CD4-positive, alpha-beta memory T cell (primary cell): ENCODE measurements at regions of chr19 and their contacts with region 1.

Region 1: DNA sequence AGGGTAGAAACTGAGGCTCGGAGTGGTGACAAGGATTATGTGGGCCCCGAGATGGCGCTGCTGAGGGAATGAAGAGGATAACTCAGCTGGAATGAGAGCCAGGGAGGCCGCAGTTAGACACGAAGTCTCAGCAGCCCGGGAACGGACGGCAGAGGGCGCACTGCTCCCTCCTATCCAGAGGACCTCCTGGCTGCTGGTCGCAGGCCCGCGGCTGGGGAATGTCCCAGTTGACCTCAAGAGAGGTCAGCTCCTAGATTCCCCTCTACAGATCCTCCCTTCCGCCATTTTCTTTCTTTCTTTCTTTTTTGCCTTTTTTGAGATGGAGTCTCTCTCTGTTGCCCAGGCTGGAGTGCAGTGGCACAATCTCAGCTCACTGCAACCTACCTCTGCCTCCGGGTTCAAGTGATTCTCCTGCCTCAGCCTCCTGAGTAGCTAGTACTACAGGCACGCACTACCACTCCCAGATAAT is 24.1 kb upstream of the ASPDH start:
- DNase-seq: peak in 4 of 5 donors; percentile 26 to 35 (median 30)
- H3K4me3 ChIP-seq: no peak overlapping the region
- H3K4me3 Mint-ChIP-seq: no peak overlapping the region
- H3K27ac ChIP-seq: no peak overlapping the region
- H3K27ac Mint-ChIP-seq: no peak overlapping the region
- H3K4me1 ChIP-seq: no peaks in the 10 kb centered on the region
- H3K4me1 Mint-ChIP-seq: no peaks in the 10 kb centered on the region
- H3K27me3 ChIP-seq: no peaks in the 10 kb centered on the region
- H3K27me3 Mint-ChIP-seq: peaks cover 11 to 23% of the 10 kb centered on the region in 2 donors

Region 2: DNA sequence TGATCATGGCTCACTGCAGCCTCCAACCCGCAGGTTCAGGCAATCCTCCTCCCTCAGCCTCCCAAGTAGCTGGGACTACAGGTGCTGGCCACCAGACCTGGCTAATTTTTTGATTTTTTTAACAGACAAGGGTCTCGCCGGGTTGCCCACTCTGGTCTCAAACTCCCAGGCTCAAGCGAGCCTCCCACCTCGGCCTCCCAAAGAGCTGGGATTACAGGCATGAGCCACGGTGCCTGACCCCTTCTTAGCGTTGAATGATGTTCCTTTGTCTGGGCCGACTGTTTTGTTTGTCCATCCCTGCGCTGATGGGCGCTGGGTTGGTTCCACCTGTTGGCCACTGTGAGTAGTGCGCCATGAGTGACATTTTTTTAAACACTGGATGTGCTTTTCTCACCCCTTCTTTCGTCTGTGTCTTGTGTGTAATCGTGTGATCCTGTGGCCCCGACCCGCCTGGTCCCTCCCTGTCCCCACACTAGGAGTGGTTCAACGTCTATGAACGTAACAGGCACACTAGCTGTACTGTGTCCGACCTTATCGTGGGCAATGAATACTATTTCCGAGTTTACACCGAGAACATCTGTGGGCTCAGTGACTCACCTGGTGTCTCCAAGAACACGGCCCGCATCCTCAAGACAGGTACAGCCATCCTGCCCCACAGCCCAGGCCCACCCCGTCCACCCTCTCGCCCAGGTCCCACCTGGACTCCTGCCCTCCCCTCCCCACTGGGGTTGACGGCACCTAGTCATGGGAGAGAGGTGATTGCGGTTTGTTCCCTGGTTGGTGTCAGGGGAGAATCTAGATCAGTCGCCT is 76.5 kb before region 1 on chr19:
- CTCF ChIA-PET with region 1: no interaction called
- POLR2A ChIA-PET with region 1: no interaction called
- intact Hi-C with region 1: no loop called
- DNase-seq: peak in 4 of 5 donors; percentile 37 to 51 (median 46)
- H3K4me3 ChIP-seq: no peak overlapping the region
- H3K4me3 Mint-ChIP-seq: no peak overlapping the region
- H3K27ac ChIP-seq: no peak overlapping the region
- H3K27ac Mint-ChIP-seq: peak overlapping the region in 1 of 7 donors; percentile 63
- H3K4me1 ChIP-seq: no peaks in the 10 kb centered on the region
- H3K4me1 Mint-ChIP-seq: peaks cover 3 to 6% (median 4%) of the 10 kb centered on the region in 4 donors
- H3K27me3 ChIP-seq: peaks cover 2% of the 10 kb centered on the region
- H3K27me3 Mint-ChIP-seq: peaks cover 5 to 18% of the 10 kb centered on the region in 2 donors

Region 3: GRCh38 chr19:50556282-50557008 is 18.6 kb after region 1 on chr19:
- CTCF ChIA-PET with region 1: interaction called, 19 read pairs
- POLR2A ChIA-PET with region 1: no interaction called
- intact Hi-C with region 1: no loop called
- DNase-seq: peak; percentile 57 to 66 (median 64)
- H3K4me3 ChIP-seq: peak overlapping the region; percentile 36 to 46
- H3K4me3 Mint-ChIP-seq: peak overlapping the region; percentile 85 to 96 (median 92)
- H3K27ac ChIP-seq: no peak overlapping the region
- H3K27ac Mint-ChIP-seq: peak overlapping the region in 5 of 7 donors; percentile 25 to 83 (median 65)
- H3K4me1 ChIP-seq: peaks cover 4% of the 10 kb centered on the region
- H3K4me1 Mint-ChIP-seq: peaks cover 5 to 15% (median 10%) of the 10 kb centered on the region in 4 donors
- H3K27me3 ChIP-seq: peaks cover 4% of the 10 kb centered on the region
- H3K27me3 Mint-ChIP-seq: peaks cover 37 to 56% of the 10 kb centered on the region in 2 donors